ENCODE measurements at regions of chr7 and their contacts with region 1.

Region 1: DNA sequence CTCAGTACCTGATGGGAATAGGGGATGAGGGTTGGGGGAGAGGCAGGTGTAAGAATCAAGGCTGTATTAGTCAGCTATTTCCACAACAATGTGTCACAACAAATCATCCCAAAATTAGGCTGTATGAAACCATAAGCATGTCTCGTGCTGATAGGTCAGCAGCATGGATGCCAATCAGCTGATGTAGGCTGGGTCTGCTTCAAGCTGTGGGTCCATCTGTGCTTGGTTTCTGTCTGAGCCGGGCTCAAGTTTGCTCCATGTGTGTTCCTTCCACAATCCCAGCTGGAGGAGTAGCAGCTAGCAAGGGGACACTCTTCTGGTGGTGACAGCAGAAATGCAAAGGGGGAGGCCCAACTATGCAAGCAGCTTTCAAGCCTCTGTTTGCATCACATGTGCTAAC is 97.9 kb upstream of the ZNF746 start:
- DNase-seq: no peak
- H3K4me3 ChIP-seq: no peak overlapping the region
- CTCF ChIP-seq: no peak

Region 2: GRCh38 chr7:149524394-149524793 is 71.1 kb before region 1 on chr7:
- CTCF ChIA-PET with region 1: no interaction called
- POLR2A ChIA-PET with region 1: no interaction called
- DNase-seq: no peak
- H3K4me3 ChIP-seq: no peak overlapping the region
- CTCF ChIP-seq: no peak

Region 3: DNA sequence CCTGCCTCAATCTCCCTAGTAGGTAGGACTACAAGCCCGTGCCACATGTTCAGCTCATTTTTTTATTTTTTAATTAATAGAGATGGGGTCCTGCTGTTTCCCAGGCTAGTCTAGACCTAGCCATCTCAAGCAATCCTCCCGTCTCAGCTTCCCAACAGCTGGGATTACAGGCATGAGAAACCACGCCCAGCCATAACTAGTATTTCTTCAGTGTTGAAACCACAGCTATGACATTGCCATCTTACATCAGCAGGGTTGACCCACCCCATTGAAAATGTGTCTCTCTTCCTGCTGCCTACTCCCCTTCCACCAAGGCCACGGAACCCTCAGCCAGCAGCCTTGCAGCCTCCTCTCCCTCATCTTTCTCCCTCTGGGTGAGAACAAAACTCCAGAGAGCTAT is 35.8 kb before region 1 on chr7:
- CTCF ChIA-PET with region 1: no interaction called
- POLR2A ChIA-PET with region 1: no interaction called
- DNase-seq: peak; percentile 58
- H3K4me3 ChIP-seq: no peak overlapping the region
- CTCF ChIP-seq: no peak

Region 4: GRCh38 chr7:149584530-149584929 is 11.0 kb before region 1 on chr7:
- CTCF ChIA-PET with region 1: interaction called, 10 read pairs
- POLR2A ChIA-PET with region 1: no interaction called
- DNase-seq: no peak
- H3K4me3 ChIP-seq: no peak overlapping the region
- CTCF ChIP-seq: no peak

Measured in AG04449 (cell line).